ENCODE measurements at regions of chr15 and their contacts with region 1.

Region 1: GRCh38 chr15:94324117-94324826 is 92.9 kb downstream of the MCTP2 start:
- DNase-seq: peak; percentile 70
- H3K4me3 Mint-ChIP-seq: no peak overlapping the region
- H3K27ac Mint-ChIP-seq: no peak overlapping the region
- H3K4me1 Mint-ChIP-seq: peaks cover 8% of the 10 kb centered on the region
- H3K27me3 Mint-ChIP-seq: no peaks in the 10 kb centered on the region

Region 2: DNA sequence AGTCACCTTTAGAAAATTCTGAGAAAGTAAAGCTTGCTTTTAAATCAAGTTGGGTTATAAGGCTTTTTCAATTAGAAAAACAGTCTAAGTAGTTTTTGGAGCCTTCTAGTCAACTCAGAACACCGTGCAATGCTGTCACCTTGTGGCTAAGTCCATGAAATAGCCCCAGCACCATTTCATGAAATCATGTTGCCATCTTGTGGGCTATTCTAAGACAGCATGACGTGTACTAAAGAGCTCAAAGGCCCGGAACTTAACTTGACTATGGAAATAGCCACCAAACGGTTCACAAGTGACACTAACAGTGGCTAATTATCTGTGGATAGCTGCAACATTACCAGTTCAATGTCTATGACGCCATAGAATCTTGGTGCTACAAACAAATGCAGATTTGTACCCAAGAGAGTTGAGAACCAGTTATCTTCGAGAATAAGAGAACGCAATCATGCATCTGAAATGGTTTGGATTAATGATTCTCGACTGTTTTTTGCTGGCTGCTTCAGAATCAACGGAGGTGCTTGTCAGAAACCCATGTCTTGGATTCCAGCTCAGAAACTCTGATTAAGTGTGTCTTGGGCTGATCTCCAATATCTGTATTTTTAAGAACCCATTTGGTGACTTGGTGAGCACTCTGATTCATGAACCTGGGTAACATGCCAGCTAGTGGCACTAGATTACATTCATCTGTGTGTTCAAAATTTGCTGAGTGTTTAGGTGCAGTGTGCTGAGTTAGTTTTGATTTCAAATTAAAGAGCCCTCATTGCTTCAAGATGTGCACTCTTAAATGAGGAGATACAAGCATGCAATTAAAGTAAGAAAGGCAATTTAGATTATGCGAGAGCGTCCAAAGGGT is 204.1 kb before region 1 on chr15:
- CTCF ChIA-PET with region 1: interaction called, 14 read pairs
- DNase-seq: peak; percentile 62
- H3K4me3 Mint-ChIP-seq: no peak overlapping the region
- H3K27ac Mint-ChIP-seq: no peak overlapping the region
- H3K4me1 Mint-ChIP-seq: no peaks in the 10 kb centered on the region
- H3K27me3 Mint-ChIP-seq: no peaks in the 10 kb centered on the region

Region 3: DNA sequence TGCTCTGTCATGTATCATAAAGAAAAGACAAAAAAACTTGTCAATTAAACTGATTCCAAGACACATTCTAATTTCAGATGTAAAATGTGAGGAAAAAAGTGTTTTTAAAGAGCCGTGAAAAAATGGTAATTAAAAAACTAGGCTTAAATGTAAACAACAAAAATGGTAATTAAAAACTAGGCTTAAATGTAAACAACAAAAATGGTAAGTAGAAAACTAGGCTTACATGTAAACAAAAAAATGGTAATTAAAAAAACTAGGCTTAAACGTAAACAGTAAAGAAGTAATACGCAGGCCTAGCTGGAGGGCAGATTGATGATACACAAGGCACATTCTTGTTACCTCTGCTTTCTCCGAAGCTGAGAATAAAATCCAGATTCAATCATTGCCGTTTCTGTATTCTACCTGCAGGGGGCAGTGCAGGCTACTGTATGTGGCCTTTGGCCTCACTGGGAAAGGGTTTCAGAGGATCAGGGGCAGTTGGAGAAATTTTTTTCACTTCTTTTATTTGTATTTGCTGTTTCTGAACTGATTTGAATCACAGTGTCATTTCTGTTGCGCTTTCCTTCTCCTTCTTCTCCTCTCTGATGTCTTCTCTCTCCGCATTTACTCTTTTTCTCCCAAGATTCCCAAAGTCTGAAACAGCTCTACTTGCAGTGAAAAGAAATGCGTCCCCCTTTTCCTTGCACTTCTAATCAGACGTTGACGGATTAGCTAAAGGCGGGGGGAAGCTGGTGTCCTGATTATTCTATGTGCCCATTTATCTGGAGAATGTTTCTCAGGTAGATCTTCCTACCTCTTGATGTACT is 160.1 kb before region 1 on chr15:
- CTCF ChIA-PET with region 1: interaction called, 297 read pairs
- DNase-seq: peak; percentile 69
- H3K4me3 Mint-ChIP-seq: no peak overlapping the region
- H3K27ac Mint-ChIP-seq: no peak overlapping the region
- H3K4me1 Mint-ChIP-seq: no peaks in the 10 kb centered on the region
- H3K27me3 Mint-ChIP-seq: peaks cover 9% of the 10 kb centered on the region

Region 4: GRCh38 chr15:94230956-94231722 is 93.1 kb before region 1 on chr15 and contains the start of gene MCTP2:
- CTCF ChIA-PET with region 1: interaction called, 63 read pairs
- DNase-seq: peak; percentile 89
- H3K4me3 Mint-ChIP-seq: peak within 1 kb of the TSS; percentile 88
- H3K27ac Mint-ChIP-seq: peak within 1 kb of the TSS; percentile 89
- H3K4me1 Mint-ChIP-seq: peaks cover 54% of the 10 kb centered on the region
- H3K27me3 Mint-ChIP-seq: peaks cover 3% of the 10 kb centered on the region

Region 5: GRCh38 chr15:94335616-94336015 is 11.3 kb after region 1 on chr15:
- CTCF ChIA-PET with region 1: interaction called, 13 read pairs
- DNase-seq: no peak
- H3K4me3 Mint-ChIP-seq: no peak overlapping the region
- H3K27ac Mint-ChIP-seq: no peak overlapping the region
- H3K4me1 Mint-ChIP-seq: no peaks in the 10 kb centered on the region
- H3K27me3 Mint-ChIP-seq: no peaks in the 10 kb centered on the region